ENCODE measurements at regions of chr6 and their contacts with region 1.

Region 1: GRCh38 chr6:6547110-6547879 is 41.2 kb upstream of the LY86 start:
- DNase-seq: peak; percentile 79
- ATAC-seq: peak; percentile 85
- H3K4me3 ChIP-seq: peak overlapping the region; percentile 46; the same call in 1 of the 2 replicates
- H3K27ac ChIP-seq: peak overlapping the region; percentile 80
- H3K4me1 ChIP-seq: peaks cover 43% of the 10 kb centered on the region
- H3K27me3 ChIP-seq: no peaks in the 10 kb centered on the region
- CTCF ChIP-seq: peak; percentile 86 to 98 (median 91); a peak in 5 of 6 replicates
- EP300 ChIP-seq: no peak
- POLR2A ChIP-seq: no peak
- RAD21 ChIP-seq: peak; percentile 89

Region 2: DNA sequence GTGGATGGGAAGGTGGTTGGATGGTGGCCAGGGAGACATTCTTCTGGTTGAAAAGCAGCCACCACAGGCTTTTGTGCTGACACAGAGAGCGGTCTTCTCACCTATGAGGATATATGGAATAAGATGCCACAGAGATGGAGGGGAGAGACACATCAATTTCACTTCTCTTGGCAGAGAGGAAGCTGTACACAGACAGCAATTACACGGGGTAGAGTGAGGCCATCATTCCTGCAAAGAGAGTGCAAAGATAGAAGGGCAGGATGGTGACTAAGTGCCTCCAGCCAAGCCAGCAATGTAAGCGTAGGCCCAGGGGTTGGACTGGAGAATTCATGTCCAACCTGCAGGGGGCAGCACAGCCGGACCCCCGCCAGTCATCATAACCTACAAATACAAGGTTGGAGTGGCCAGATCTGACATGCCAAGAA is 596.9 kb before region 1 on chr6:
- CTCF ChIA-PET with region 1: no interaction called
- POLR2A ChIA-PET with region 1: no interaction called
- RAD21 ChIA-PET with region 1: no interaction called
- SMC1A ChIA-PET with region 1: interaction called, 3 read pairs
- in situ Hi-C with region 1: no loop called
- intact Hi-C with region 1: loop called (anchors 2 kb)
- DNase-seq: no peak
- ATAC-seq: peak; percentile 84
- H3K4me3 ChIP-seq: no peak overlapping the region
- H3K27ac ChIP-seq: no peak overlapping the region
- H3K4me1 ChIP-seq: no peaks in the 10 kb centered on the region
- H3K27me3 ChIP-seq: no peaks in the 10 kb centered on the region; a peak in 2 of 4 replicates
- CTCF ChIP-seq: peak; percentile 55 to 66 (median 63)
- EP300 ChIP-seq: no peak
- POLR2A ChIP-seq: no peak
- RAD21 ChIP-seq: peak; percentile 23; the same call in 1 of the 2 replicates

Region 3: DNA sequence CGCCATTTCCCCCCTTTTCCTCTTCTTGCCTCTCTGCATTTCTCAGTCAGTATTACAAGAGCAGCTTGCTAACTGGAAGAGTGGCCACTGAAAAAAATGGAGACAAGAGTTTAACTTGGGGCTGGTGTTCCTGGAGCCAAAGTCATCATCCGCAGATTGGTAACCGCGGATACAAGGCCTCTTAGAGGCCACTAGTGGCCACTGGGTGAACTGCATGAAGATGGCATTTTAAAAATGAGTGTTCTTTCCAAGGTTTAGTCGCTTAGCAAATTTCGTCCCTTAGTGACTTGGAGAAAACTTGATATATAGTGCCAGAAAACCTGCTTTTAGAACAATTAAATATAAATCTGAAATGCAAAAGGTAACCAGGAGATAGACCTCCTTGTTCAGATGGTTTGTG is 231.6 kb before region 1 on chr6:
- CTCF ChIA-PET with region 1: interaction called, 8 read pairs
- POLR2A ChIA-PET with region 1: no interaction called
- RAD21 ChIA-PET with region 1: interaction called, 8 read pairs
- SMC1A ChIA-PET with region 1: interaction called, 6 read pairs
- in situ Hi-C with region 1: no loop called
- intact Hi-C with region 1: loop called (anchors 2 kb)
- DNase-seq: no peak
- ATAC-seq: peak; percentile 26; the same call in 2 of the 3 replicates
- H3K4me3 ChIP-seq: no peak overlapping the region
- H3K27ac ChIP-seq: no peak overlapping the region
- H3K4me1 ChIP-seq: peaks cover 11% of the 10 kb centered on the region
- H3K27me3 ChIP-seq: peaks cover 0 to 4% of the 10 kb centered on the region in 2 experiments; a peak in 2 of 4 replicates
- CTCF ChIP-seq: peak; percentile 78 to 89 (median 89)
- EP300 ChIP-seq: no peak
- POLR2A ChIP-seq: no peak
- RAD21 ChIP-seq: peak; percentile 75

Region 4: GRCh38 chr6:6486595-6486994 is 60.7 kb before region 1 on chr6:
- CTCF ChIA-PET with region 1: interaction called, 14 read pairs
- POLR2A ChIA-PET with region 1: no interaction called
- RAD21 ChIA-PET with region 1: interaction called, 11 read pairs
- SMC1A ChIA-PET with region 1: interaction called, 4 read pairs
- in situ Hi-C with region 1: no loop called
- intact Hi-C with region 1: no loop called
- DNase-seq: no peak
- ATAC-seq: no peak
- H3K4me3 ChIP-seq: no peak overlapping the region
- H3K27ac ChIP-seq: no peak overlapping the region
- H3K4me1 ChIP-seq: no peaks in the 10 kb centered on the region
- H3K27me3 ChIP-seq: no peaks in the 10 kb centered on the region
- CTCF ChIP-seq: no peak
- EP300 ChIP-seq: no peak
- POLR2A ChIP-seq: no peak
- RAD21 ChIP-seq: no peak

Region 5: DNA sequence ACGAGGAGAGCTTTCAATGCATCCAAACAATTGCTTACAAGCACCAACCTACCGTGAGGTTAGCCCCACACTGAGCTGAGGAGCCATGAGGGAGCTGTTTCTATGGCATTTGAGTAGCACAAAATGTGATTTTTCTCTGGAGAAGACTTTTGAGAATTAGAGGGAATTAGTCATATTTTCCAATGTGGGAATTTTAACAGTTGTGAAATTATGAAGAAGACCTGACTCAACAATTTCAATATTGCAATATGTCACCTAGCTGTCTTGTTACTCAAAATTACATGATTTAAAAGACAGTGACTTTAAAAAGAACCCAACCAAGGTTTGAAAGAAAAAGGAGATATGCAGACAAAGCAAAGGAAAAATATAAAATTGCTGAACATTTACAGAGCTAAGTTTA is 21.4 kb before region 1 on chr6:
- CTCF ChIA-PET with region 1: interaction called, 12 read pairs
- POLR2A ChIA-PET with region 1: no interaction called
- RAD21 ChIA-PET with region 1: interaction called, 5 read pairs
- SMC1A ChIA-PET with region 1: interaction called, 16 read pairs
- in situ Hi-C with region 1: no loop called
- intact Hi-C with region 1: no loop called
- DNase-seq: no peak
- ATAC-seq: no peak
- H3K4me3 ChIP-seq: no peak overlapping the region
- H3K27ac ChIP-seq: no peak overlapping the region
- H3K4me1 ChIP-seq: no peaks in the 10 kb centered on the region
- H3K27me3 ChIP-seq: no peaks in the 10 kb centered on the region
- CTCF ChIP-seq: no peak
- EP300 ChIP-seq: no peak
- POLR2A ChIP-seq: no peak
- RAD21 ChIP-seq: no peak

Region 6: GRCh38 chr6:6661684-6662083 is 114.4 kb after region 1 on chr6:
- CTCF ChIA-PET with region 1: interaction called, 3 read pairs
- POLR2A ChIA-PET with region 1: no interaction called
- RAD21 ChIA-PET with region 1: no interaction called
- SMC1A ChIA-PET with region 1: interaction called, 13 read pairs
- in situ Hi-C with region 1: no loop called
- intact Hi-C with region 1: no loop called
- DNase-seq: no peak
- ATAC-seq: no peak
- H3K4me3 ChIP-seq: no peak overlapping the region
- H3K27ac ChIP-seq: no peak overlapping the region
- H3K4me1 ChIP-seq: peaks cover 24% of the 10 kb centered on the region
- H3K27me3 ChIP-seq: no peaks in the 10 kb centered on the region
- CTCF ChIP-seq: no peak
- EP300 ChIP-seq: no peak
- POLR2A ChIP-seq: no peak
- RAD21 ChIP-seq: no peak

Measured in GM12878 (cell line).